Prostate gland (tissue), 2 donors: ENCODE measurements at regions of chr20 and their contacts with region 1.

Region 1: GRCh38 chr20:3109350-3110302 is 25.1 kb upstream of the AVP start:
- DNase-seq: no peak
- H3K4me3 ChIP-seq: no peak overlapping the region
- H3K27ac ChIP-seq: no peak overlapping the region
- H3K4me1 ChIP-seq: no peaks in the 10 kb centered on the region
- H3K27me3 ChIP-seq: no peaks in the 10 kb centered on the region
- CTCF ChIP-seq: no peak
- POLR2A ChIP-seq: no peak

Region 2: DNA sequence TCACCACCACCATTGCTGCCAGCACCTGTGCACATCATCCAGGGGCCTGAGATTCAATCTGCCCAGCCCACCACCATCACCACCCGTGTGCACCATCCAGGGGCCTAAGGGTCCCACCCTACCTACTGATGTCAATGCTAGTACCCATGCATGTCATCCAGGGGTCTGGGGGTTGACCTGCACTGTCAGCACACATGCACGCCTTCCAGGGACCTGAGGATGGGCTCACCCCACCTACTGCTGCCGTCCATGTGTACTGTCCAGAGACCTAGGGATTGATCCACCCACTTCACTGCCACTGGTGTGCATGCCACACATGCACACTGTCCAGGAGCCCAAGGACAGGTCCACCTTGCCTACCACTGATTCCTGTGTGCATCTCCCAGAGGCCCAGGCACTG is 50.1 kb before region 1 on chr20:
- intact Hi-C with region 1: loop called (anchors 5 kb)
- DNase-seq: no peak
- H3K4me3 ChIP-seq: no peak overlapping the region
- H3K27ac ChIP-seq: no peak overlapping the region
- H3K4me1 ChIP-seq: no peaks in the 10 kb centered on the region
- H3K27me3 ChIP-seq: no peaks in the 10 kb centered on the region
- CTCF ChIP-seq: no peak
- POLR2A ChIP-seq: no peak